Activated naive CD4-positive, alpha-beta T cell treated with anti-CD3 and anti-CD28 coated beads, Interleukin-2, amount 10 ng/mL, durations not matched to agents 7 days and 5 days (primary cell): ENCODE measurements at regions of chr17 and their contacts with region 1.

Region 1: GRCh38 chr17:51371732-51372151 is 111.4 kb downstream of the UTP18 start:
- DNase-seq: peak; percentile 68
- H3K4me3 Mint-ChIP-seq: no peak overlapping the region
- H3K27ac Mint-ChIP-seq: no peak overlapping the region
- H3K4me1 Mint-ChIP-seq: peaks cover 19% of the 10 kb centered on the region
- H3K27me3 Mint-ChIP-seq: peaks cover 13% of the 10 kb centered on the region

Region 2: DNA sequence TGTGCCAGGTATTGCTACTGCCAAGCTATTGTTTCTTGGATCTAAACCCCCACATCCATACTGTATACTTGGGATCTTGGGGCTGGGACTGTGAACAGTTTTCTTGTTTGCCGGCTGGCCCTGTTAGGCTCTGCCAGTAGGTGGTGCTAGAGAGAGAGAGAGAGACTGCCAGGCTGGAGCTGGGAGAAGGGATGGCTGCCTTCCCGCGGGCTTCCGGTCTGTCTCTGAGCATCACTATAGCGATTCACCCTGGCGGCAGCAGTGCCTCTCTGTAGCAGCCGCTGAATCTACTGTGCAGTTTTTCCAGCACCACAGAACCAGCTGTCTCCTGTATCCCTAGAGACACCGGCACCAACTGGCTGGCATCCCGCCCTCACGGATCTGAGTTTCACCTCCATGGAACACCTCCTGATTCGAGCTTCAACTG is 89.8 kb after region 1 on chr17:
- CTCF ChIA-PET with region 1: interaction called, 15 read pairs
- DNase-seq: peak; percentile 72
- H3K4me3 Mint-ChIP-seq: no peak overlapping the region
- H3K27ac Mint-ChIP-seq: no peak overlapping the region
- H3K4me1 Mint-ChIP-seq: no peaks in the 10 kb centered on the region
- H3K27me3 Mint-ChIP-seq: no peaks in the 10 kb centered on the region

Region 3: GRCh38 chr17:51540151-51540550 is 168.4 kb after region 1 on chr17:
- CTCF ChIA-PET with region 1: interaction called, 90 read pairs
- DNase-seq: peak; percentile 29
- H3K4me3 Mint-ChIP-seq: no peak overlapping the region
- H3K27ac Mint-ChIP-seq: peak overlapping the region; percentile 29
- H3K4me1 Mint-ChIP-seq: peaks cover 17% of the 10 kb centered on the region
- H3K27me3 Mint-ChIP-seq: no peaks in the 10 kb centered on the region

Region 4: DNA sequence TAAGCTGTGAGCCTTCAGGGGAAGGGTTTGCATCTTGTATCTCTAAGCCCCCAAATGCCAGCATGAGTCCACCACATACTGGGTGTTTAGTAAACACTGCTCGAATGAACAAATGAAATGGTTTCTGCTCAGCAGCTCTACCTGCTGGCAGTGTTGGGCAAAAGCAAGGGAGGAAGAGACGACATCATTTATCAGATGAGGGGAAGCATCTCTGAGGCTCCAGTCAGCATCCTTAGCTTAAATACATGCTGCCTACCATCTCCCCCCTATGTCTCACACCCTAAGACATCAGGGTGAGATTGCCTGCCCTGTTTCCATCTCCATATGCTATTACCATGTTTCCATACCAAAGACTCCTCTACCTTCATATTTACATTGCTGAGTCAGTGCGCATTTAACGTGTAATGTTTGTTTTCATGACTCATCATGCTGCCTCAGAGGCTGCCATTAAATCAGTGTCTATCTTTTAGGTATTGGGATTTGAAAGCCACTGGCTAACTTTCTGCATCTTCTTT is 268.4 kb after region 1 on chr17:
- CTCF ChIA-PET with region 1: interaction called, 15 read pairs
- DNase-seq: peak; percentile 26
- H3K4me3 Mint-ChIP-seq: no peak overlapping the region
- H3K27ac Mint-ChIP-seq: no peak overlapping the region
- H3K4me1 Mint-ChIP-seq: no peaks in the 10 kb centered on the region
- H3K27me3 Mint-ChIP-seq: peaks cover 9% of the 10 kb centered on the region

Region 5: GRCh38 chr17:52106638-52107261 is 735.0 kb after region 1 on chr17:
- CTCF ChIA-PET with region 1: interaction called, 11 read pairs
- DNase-seq: peak; percentile 55
- H3K4me3 Mint-ChIP-seq: no peak overlapping the region
- H3K27ac Mint-ChIP-seq: no peak overlapping the region
- H3K4me1 Mint-ChIP-seq: no peaks in the 10 kb centered on the region
- H3K27me3 Mint-ChIP-seq: no peaks in the 10 kb centered on the region